Natural killer cell (primary cell): ENCODE measurements at regions of chr1 and their contacts with region 1.

Region 1: GRCh38 chr1:160376525-160377131 is 9.8 kb downstream of the NHLH1 start:
- DNase-seq: peak in 1 of 2 donors; percentile 76
- ATAC-seq: peak; percentile 63 to 72 (median 64)
- H3K4me3 ChIP-seq: no peak overlapping the region
- H3K4me3 Mint-ChIP-seq: peak overlapping the region; percentile 35
- H3K27ac ChIP-seq: no peak overlapping the region
- H3K27ac Mint-ChIP-seq: peak overlapping the region in 1 of 2 donors; percentile 88
- H3K4me1 ChIP-seq: peaks cover 21% of the 10 kb centered on the region
- H3K4me1 Mint-ChIP-seq: peaks cover 15 to 18% of the 10 kb centered on the region in 2 donors
- H3K27me3 ChIP-seq: no peaks in the 10 kb centered on the region
- H3K27me3 Mint-ChIP-seq: peaks cover 0 to 13% of the 10 kb centered on the region in 2 donors
- CTCF ChIP-seq: peak; percentile 77

Region 2: DNA sequence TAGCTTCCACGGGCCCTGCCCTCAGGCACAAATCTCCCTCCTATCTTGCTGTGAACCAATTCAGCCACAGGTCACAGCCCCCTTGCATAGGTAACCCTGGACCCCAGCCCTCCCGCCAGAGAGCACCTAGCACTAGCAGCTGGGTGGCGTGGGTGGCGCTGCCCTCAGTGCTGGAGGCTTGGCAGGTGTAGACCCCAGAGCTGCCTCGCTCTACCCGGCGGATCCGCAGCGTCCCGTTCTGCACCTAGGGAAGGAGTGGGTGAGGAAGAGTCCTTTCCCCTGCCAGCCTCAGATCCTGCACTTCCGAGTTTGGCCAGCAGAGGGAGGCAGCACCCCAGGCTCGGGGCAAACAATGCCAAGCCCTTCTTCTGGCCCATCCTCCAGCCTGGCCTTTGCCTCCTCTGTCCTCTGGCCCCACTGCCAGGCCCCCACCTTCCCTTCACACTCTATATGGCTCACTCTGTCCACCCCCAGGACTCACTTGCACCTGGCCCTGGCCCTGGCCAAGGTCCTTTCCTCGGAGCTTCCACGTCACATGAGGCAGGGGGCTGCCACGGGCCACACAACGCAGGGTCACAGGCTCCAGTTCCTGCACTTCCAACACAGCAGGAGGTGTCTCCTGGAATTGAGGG is 440.2 kb before region 1 on chr1:
- intact Hi-C with region 1: loop called (anchors 10 kb)
- DNase-seq: peak; percentile 83 to 89
- ATAC-seq: peak; percentile 80 to 99 (median 94)
- H3K4me3 ChIP-seq: no peak overlapping the region
- H3K4me3 Mint-ChIP-seq: no peak overlapping the region
- H3K27ac ChIP-seq: no peak overlapping the region
- H3K27ac Mint-ChIP-seq: no peak overlapping the region
- H3K4me1 ChIP-seq: peaks cover 24% of the 10 kb centered on the region
- H3K4me1 Mint-ChIP-seq: peaks cover 0 to 7% of the 10 kb centered on the region in 2 donors
- H3K27me3 ChIP-seq: no peaks in the 10 kb centered on the region
- H3K27me3 Mint-ChIP-seq: peaks cover 20 to 22% of the 10 kb centered on the region in 2 donors
- CTCF ChIP-seq: peak; percentile 97

Region 3: DNA sequence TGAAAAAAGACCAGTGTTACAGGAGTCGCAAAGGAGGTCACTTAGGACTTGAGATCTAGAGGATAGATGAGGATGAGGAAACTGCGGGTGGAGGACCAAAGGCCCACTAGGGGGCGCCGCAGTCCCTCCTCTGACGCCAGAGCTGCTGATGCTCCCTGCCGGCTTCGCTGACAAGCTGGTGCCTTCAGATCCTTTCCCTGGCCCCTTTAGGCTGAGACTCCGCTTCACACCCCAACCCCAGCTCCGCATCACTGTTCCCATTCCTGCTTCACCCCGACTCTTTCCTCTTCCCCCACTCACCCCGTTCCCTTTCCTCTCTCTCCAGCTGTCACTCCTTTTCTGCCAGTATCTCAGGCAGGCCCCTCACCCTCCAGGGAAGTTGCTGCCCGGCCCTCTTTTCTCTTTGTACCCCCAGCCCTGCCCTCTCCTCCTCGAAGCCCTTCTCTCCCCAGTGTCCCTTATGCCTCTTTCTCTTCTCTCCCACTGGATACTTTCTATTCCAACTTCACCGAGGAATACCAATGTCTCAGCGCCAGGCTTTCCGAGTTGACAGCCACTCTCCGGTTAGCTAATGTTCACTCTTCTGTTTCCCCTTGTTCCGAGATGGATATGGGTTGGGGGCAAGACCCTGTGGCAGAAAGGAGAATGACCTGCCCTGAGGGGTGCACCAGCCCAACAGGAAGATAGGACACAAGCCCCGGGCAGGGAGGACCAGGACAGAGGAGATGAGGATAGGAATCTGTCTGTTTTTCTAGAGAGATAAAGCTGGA is 290.8 kb before region 1 on chr1:
- intact Hi-C with region 1: loop called (anchors 5 kb)
- DNase-seq: peak; percentile 64 to 87
- ATAC-seq: peak; percentile 61 to 81 (median 70)
- H3K4me3 ChIP-seq: no peak overlapping the region
- H3K4me3 Mint-ChIP-seq: no peak overlapping the region
- H3K27ac ChIP-seq: no peak overlapping the region
- H3K27ac Mint-ChIP-seq: no peak overlapping the region
- H3K4me1 ChIP-seq: peaks cover 10% of the 10 kb centered on the region
- H3K4me1 Mint-ChIP-seq: peaks cover 11 to 19% of the 10 kb centered on the region in 2 donors
- H3K27me3 ChIP-seq: peaks cover 18% of the 10 kb centered on the region
- H3K27me3 Mint-ChIP-seq: peaks cover 23 to 24% of the 10 kb centered on the region in 2 donors
- CTCF ChIP-seq: peak; percentile 63

Region 4: GRCh38 chr1:160098852-160099561 is 277.6 kb before region 1 on chr1:
- intact Hi-C with region 1: loop called (anchors 1 kb)
- DNase-seq: peak; percentile 89 to 97
- ATAC-seq: peak; percentile 85 to 93 (median 88)
- H3K4me3 ChIP-seq: peak overlapping the region; percentile 39
- H3K4me3 Mint-ChIP-seq: peak overlapping the region; percentile 78
- H3K27ac ChIP-seq: peak overlapping the region; percentile 87
- H3K27ac Mint-ChIP-seq: peak overlapping the region; percentile 84 to 89
- H3K4me1 ChIP-seq: peaks cover 45% of the 10 kb centered on the region
- H3K4me1 Mint-ChIP-seq: peaks cover 39 to 56% of the 10 kb centered on the region in 2 donors
- H3K27me3 ChIP-seq: no peaks in the 10 kb centered on the region
- H3K27me3 Mint-ChIP-seq: peaks cover 0 to 2% of the 10 kb centered on the region in 2 donors
- CTCF ChIP-seq: no peak

Region 5: DNA sequence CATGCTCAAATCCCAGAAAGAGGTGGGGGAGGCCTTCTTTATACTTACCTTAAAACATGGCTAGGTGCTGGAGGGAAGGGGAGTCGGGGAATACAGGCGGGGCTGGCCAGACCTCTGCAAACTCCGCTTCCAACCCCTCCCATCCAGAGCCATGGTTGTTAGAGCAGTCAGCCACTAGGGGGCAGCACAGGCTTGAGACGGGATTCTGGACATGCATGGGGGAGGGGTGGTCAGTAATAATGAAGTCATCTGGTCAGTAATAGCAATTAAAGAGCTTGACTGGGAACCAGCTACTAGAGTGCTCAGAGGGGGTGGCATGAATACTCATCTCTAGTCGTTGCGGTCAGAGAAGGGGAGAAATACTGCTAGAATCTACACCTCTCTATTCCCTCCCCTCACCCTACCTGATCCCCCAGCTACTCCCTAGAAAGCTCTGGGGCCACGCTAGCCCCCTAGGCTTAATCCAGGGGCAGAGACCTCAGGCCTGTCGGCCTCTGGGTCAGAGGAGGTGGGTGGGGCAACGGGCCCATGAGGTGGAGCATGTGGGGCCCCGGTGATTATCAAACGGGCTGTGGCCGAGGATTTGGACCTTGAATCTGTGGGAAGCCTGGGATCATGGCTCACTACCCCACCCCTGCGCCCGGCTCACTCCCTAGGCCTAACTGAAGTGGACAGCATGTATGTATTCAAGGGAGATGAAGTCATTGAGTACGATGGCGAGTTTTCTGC is 183.4 kb before region 1 on chr1:
- intact Hi-C with region 1: loop called (anchors 1 kb)
- DNase-seq: peak; percentile 78 to 89
- ATAC-seq: peak; percentile 85 to 99 (median 97)
- H3K4me3 ChIP-seq: no peak overlapping the region
- H3K4me3 Mint-ChIP-seq: no peak overlapping the region
- H3K27ac ChIP-seq: no peak overlapping the region
- H3K27ac Mint-ChIP-seq: no peak overlapping the region
- H3K4me1 ChIP-seq: peaks cover 7% of the 10 kb centered on the region
- H3K4me1 Mint-ChIP-seq: no peaks in the 10 kb centered on the region
- H3K27me3 ChIP-seq: no peaks in the 10 kb centered on the region
- H3K27me3 Mint-ChIP-seq: peaks cover 0 to 2% of the 10 kb centered on the region in 2 donors
- CTCF ChIP-seq: peak; percentile 88